PC-3 (cell line): ENCODE measurements at regions of chr3 and their contacts with region 1.

Region 1: GRCh38 chr3:180433152-180433551 is 168.8 kb upstream of the TTC14 start:
- DNase-seq: peak; percentile 94
- ATAC-seq: peak; percentile 97
- H3K4me3 ChIP-seq: no peak overlapping the region
- H3K27ac ChIP-seq: peak overlapping the region; percentile 88
- H3K4me1 ChIP-seq: peaks cover 22% of the 10 kb centered on the region
- H3K27me3 ChIP-seq: no peaks in the 10 kb centered on the region
- CTCF ChIP-seq: no peak

Region 2: GRCh38 chr3:180408654-180409053 is 24.5 kb before region 1 on chr3:
- CTCF ChIA-PET with region 1: no interaction called
- POLR2A ChIA-PET with region 1: interaction called, 4 read pairs
- intact Hi-C with region 1: loop called (anchors 1 kb)
- DNase-seq: peak; percentile 95
- ATAC-seq: peak; percentile 94
- H3K4me3 ChIP-seq: peak overlapping the region; percentile 47
- H3K27ac ChIP-seq: peak overlapping the region; percentile 93
- H3K4me1 ChIP-seq: peaks cover 31% of the 10 kb centered on the region
- H3K27me3 ChIP-seq: no peaks in the 10 kb centered on the region
- CTCF ChIP-seq: no peak

Region 3: DNA sequence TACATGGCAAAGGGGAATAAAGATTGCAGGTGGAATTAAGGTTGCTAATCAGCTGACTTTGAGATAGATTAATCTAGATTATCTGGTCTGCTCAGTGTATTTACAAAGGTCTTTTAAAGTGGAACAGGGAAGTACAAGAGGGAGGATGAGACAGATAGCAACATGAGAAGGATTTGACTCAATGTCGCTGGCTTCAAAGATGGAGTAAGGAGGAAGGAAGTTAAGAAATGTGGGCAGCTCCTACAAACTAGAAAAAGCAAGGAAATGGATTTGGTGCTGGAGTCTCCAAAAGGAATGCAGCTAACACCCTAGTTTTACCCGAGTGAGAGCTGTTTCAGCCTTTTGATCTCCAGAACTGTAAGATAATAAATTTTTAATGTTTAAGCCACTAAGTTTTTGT is 11.9 kb before region 1 on chr3:
- CTCF ChIA-PET with region 1: no interaction called
- POLR2A ChIA-PET with region 1: no interaction called
- intact Hi-C with region 1: loop called (anchors 1 kb)
- DNase-seq: peak; percentile 33
- ATAC-seq: peak; percentile 11; the same call in 1 of the 2 replicates
- H3K4me3 ChIP-seq: no peak overlapping the region; the same call in 1 of the 2 replicates
- H3K27ac ChIP-seq: peak overlapping the region; percentile 92
- H3K4me1 ChIP-seq: peaks cover 52% of the 10 kb centered on the region
- H3K27me3 ChIP-seq: no peaks in the 10 kb centered on the region
- CTCF ChIP-seq: no peak

Region 4: DNA sequence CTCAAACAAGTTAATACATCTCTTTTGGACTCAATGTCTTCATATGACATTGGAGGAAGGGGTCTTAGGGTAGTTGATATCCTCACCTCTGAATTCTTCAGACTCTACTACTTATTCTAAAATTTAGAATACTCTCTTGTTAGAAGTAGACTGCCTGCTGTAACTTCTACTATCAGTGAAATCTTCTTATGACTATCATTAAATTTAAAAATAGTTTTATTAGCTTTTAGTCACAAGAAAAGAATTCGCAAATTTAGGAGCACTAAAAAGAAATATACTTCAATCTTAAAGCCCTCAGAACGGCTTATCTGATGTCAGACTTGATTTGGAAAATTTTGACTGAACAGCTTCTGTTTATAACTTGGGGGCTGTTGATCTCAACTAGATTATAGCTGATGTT is 101.7 kb after region 1 on chr3:
- CTCF ChIA-PET with region 1: no interaction called
- POLR2A ChIA-PET with region 1: no interaction called
- intact Hi-C with region 1: loop called (anchors 1 kb)
- DNase-seq: peak; percentile 58
- ATAC-seq: peak; percentile 87
- H3K4me3 ChIP-seq: no peak overlapping the region
- H3K27ac ChIP-seq: peak overlapping the region; percentile 57
- H3K4me1 ChIP-seq: peaks cover 18% of the 10 kb centered on the region
- H3K27me3 ChIP-seq: no peaks in the 10 kb centered on the region
- CTCF ChIP-seq: no peak